PC-9 (cell line): ENCODE measurements at regions of chr5 and their contacts with region 1.

Region 1: GRCh38 chr5:126536874-126537273 is 58.1 kb downstream of the ALDH7A1 start:
- DNase-seq: no peak
- H3K4me3 ChIP-seq: no peak overlapping the region
- H3K27ac ChIP-seq: no peak overlapping the region
- H3K4me1 ChIP-seq: peaks cover 6% of the 10 kb centered on the region
- H3K27me3 ChIP-seq: no peaks in the 10 kb centered on the region
- CTCF ChIP-seq: no peak

Region 2: DNA sequence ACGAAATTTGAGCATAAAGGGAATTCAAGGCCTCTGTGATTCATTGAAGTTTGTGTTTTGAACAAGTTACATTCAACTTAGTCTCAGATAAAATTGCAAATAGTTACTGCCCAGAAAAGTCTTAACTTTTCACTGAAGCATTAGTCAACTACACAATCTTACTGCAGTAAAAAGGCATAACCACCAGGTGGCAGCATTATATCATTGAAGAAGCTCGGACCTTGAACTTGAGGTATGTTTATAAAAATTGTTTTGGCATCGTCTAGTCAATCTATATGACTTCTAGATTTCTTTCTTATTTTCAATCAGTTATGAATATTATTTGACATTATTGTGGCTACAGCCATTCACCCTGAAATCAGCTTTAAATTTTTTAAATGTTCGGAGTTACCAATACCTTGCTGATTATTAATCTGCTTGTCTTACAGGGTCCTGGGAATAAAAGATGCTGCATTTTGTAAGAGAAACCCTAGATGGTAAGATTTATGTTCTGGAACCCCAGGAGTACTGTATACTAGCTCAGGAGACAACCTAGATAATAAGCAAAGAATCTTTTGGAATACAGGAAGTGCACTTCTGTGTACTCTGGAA is 197.6 kb before region 1 on chr5:
- CTCF ChIA-PET with region 1: interaction called, 35 read pairs
- POLR2A ChIA-PET with region 1: no interaction called
- intact Hi-C with region 1: loop called (anchors 1 kb)
- DNase-seq: peak; percentile 30 to 50
- H3K4me3 ChIP-seq: no peak overlapping the region
- H3K27ac ChIP-seq: no peak overlapping the region
- H3K4me1 ChIP-seq: peaks cover 8% of the 10 kb centered on the region; the same call in 1 of the 2 replicates
- H3K27me3 ChIP-seq: no peaks in the 10 kb centered on the region
- CTCF ChIP-seq: peak; percentile 93

Region 3: DNA sequence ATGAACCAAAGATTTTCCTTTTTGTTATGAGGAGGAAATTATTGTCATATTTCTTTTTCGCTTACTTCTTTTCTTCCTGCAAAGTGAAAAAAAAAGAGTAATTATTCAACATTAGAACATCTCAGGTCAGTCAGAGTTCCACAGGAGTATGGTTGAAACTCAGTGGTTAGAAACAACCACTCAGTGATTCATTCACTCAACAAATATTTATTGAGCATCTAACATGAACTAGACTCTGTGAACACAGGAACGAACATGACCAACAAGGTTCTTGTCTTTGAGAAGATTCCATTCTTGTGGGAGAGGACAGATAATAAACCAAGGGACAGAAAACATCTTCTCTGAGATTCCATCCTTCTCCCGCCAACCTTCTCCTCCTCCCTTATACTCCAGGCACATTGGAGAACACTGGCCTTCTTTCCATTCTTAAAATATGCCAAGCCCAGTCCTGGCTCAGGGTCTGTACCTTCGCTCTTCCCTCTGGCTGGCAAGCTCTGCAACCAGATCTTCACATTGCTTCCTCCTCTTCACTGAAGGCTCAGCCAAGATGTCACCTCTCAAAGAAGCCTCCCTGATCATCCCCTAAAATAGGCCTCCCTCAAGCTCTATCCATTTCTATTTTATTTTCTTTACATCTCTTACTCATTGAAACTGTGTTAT is 120.5 kb before region 1 on chr5:
- CTCF ChIA-PET with region 1: no interaction called
- POLR2A ChIA-PET with region 1: no interaction called
- intact Hi-C with region 1: no loop called
- DNase-seq: no peak
- H3K4me3 ChIP-seq: no peak overlapping the region
- H3K27ac ChIP-seq: no peak overlapping the region
- H3K4me1 ChIP-seq: no peaks in the 10 kb centered on the region
- H3K27me3 ChIP-seq: no peaks in the 10 kb centered on the region
- CTCF ChIP-seq: no peak

Region 4: DNA sequence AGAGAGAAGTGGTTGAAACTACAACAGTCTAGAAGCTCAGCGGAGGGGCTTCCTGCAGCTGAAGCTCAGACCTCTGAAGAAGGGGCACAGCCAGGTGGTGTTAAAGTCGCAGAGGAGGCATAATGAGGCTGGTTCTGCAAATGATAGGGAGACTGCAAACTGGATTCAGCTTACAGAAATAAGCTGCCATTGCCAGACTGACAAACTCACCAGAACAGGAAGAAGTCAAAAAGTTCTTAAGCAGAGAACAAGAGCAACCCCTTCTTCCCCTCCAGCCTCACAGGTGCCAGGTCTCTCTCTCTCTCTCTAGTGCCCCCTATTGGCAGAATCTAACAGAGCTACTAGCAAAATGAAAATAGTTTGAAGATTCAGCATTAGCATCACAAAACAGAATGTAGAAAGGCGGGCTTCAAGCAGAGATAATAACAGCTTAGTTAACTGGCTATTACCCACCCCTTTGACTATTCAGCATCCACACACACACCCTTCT is 37.0 kb before region 1 on chr5:
- CTCF ChIA-PET with region 1: interaction called, 7 read pairs
- POLR2A ChIA-PET with region 1: no interaction called
- intact Hi-C with region 1: loop called (anchors 5 kb)
- DNase-seq: no peak
- H3K4me3 ChIP-seq: no peak overlapping the region
- H3K27ac ChIP-seq: no peak overlapping the region
- H3K4me1 ChIP-seq: no peaks in the 10 kb centered on the region
- H3K27me3 ChIP-seq: no peaks in the 10 kb centered on the region
- CTCF ChIP-seq: peak; percentile 57